GM18951 (cell line): ENCODE measurements at regions of chr16 and their contacts with region 1.

Region 1: GRCh38 chr16:86554917-86555703 is at the start of gene MTHFSD:
- POLR2A ChIP-seq: peak; percentile 95

Region 2: GRCh38 chr16:87278191-87279095 is 723.3 kb after region 1 on chr16:
- in situ Hi-C with region 1: loop called (anchors 25 kb)
- POLR2A ChIP-seq: no peak